ENCODE measurements at regions of chr21 and their contacts with region 1.

Region 1: DNA sequence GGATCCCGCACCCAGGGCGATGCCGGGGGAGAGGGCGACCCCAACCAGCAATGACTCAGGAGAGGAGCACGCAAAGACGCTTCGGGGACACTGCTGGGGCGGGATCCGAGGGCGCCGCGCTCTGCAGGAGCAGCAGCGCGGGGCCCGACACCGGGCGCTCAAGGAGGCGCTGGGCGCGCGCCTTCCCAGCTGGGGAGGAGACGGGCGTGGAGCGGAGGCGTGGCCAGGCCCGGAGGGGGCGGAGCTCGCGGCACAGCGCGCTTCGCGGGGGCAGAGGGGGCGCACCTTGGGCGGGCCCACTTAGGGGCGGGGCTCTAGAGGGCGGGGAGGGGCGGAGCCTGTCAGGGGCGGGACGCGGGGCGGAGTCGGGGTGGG is 369 bp downstream of the SUMO3 start:
- DNase-seq: peak; percentile 93 to 98 (median 96)
- ATAC-seq: peak; percentile 92 to 96
- H3K4me3 ChIP-seq: peak overlapping the region; percentile 66
- H3K27ac ChIP-seq: peak overlapping the region; percentile 93
- H3K4me1 ChIP-seq: peaks cover 9% of the 10 kb centered on the region
- H3K27me3 ChIP-seq: no peaks in the 10 kb centered on the region

Region 2: GRCh38 chr21:44854664-44855446 is 37.4 kb after region 1 on chr21:
- intact Hi-C with region 1: loop called in 1 of 4 experiments (anchors 5 kb)
- DNase-seq: no peak
- ATAC-seq: peak in 1 of 2 donors; percentile 8
- H3K4me3 ChIP-seq: no peak overlapping the region
- H3K27ac ChIP-seq: peak overlapping the region; percentile 8
- H3K4me1 ChIP-seq: peaks cover 4% of the 10 kb centered on the region
- H3K27me3 ChIP-seq: no peaks in the 10 kb centered on the region

Measured in right cardiac atrium (tissue), 5 donors.